Dorsolateral prefrontal cortex (tissue), 120 donors: ENCODE measurements at regions of chr13 and their contacts with region 1.

Region 1: DNA sequence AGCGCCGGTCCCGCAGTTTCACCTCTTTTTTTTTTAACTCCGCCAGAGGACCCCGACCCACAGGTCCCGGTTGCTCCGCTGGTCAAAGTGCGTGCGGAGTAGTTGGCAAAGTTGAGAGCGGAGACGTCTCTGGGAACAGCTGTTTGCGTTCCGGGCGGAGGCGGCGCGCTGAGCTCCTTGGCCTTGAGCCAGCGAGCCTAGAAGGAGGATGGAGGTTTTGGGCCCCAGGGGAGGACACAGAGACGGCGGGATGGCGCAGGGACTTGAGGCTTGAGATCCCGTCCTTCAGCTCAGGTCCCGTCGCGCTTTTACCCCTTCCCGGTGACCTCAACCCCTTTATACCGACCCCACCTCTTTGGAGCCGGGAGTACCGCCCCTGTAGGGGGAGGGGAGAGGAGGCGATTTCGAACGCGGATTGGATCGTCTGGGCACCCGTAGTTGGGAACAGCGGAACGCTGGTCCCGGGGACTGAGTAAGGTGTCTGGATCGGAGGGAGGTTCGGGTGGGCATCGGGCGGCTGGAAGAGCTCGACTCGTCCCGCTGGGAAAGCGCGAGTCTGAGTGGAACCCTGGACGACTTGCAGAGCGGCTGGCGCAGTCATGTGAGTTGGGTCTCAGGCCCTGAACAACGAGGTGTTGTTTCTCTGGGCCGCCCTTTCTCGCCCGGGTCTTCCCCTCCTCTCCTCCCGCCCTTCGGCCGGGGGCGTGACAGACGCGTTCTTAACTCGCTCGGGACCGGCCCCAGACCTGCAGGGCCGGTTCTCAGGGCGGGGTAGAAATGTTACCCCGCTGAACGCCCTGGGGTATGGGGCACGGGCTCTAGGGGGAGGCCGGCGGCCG is at the start of gene WBP4:
- DNase-seq: peak; percentile 86 to 94 (median 88)
- H3K4me3 ChIP-seq: peak within 1 kb of the TSS; percentile 70 to 98 (median 90)
- H3K27ac ChIP-seq: peak within 1 kb of the TSS; percentile 96 to 100 (median 99)
- H3K27me3 ChIP-seq: no peaks in the 10 kb centered on the region
- CTCF ChIP-seq: peak in 25 of 56 donors; percentile 3 to 44 (median 16)
- total RNA-seq, gene WBP4: 10.6 to 23.8 (median 17.6) TPM

Region 2: DNA sequence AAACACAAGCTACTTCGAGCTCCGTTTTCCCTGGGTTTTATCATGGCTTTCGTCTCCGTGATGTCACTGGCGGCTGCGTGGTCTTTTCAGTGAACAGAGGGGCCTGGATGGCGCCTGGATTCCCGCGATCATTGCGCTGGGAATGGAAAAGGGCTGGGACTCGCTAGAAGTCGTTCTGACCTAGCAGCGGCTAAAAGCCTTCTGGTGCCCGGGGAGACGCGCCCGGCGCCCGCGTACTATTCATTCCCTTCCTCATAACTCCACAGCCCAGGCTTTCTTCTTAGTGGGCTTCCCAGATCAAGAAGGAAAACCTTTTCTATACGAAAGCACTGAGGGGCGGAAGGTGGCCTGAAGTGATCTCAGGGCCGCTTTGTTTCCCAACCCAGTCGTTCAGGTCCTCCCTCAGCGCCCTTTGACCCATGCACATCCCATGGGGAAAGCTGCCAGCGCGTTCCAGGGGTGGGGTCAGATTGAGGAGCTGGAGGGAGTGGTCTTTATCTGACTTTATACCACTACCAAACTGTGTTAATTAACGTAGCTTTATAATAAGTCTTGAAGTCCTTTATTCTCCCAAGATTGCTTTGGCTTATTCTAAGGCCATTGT is 138.8 kb before region 1 on chr13:
- intact Hi-C with region 1: loop called (anchors 2 kb)
- DNase-seq: no peak
- H3K4me3 ChIP-seq: peak overlapping the region in 2 of 59 donors; percentile 74 to 85
- H3K27ac ChIP-seq: no peak overlapping the region
- H3K27me3 ChIP-seq: no peaks in the 10 kb centered on the region
- CTCF ChIP-seq: no peak

Region 3: DNA sequence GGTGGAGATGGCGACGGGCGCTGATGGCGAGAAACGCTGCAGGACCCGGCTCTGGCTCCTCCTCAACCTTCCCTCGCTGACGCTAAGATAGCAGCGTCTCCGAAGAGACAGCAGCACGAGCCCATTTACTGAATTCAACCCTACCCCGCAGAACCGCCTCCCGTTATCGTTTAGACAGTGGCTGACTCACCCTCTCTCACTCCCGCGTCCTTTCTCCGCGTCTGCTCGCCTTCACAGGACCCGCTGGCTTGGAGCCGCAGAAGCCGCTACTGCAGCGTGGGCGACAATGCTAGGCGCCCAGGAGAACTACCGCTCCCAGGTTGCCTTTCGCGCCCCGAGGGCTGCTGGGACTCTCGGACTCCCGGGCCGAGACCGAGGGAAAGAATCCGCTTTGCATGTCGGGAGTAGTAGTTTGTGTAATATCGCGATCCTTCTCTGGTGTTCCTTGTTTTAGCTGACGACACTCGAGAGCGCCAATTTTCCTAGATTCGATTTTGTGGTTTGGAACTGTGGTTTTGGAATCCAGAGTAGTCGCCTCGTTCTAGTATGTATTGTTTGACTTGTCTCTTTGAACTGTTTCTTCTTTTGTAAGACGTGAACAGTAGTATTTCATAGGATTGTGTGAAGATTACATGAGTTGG is 71.3 kb after region 1 on chr13 and contains the start of gene KBTBD6:
- intact Hi-C with region 1: loop called in 1 of 2 experiments (anchors 1 kb)
- DNase-seq: peak; percentile 95 to 98 (median 97)
- H3K4me3 ChIP-seq: peak within 1 kb of the TSS; percentile 54 to 93 (median 82)
- H3K27ac ChIP-seq: peak within 1 kb of the TSS; percentile 52 to 95 (median 88)
- H3K27me3 ChIP-seq: no peaks in the 10 kb centered on the region
- CTCF ChIP-seq: peak in 38 of 56 donors; percentile 3 to 54 (median 30)
- total RNA-seq, gene KBTBD6: 14.9 to 35.1 (median 24.4) TPM

Region 4: GRCh38 chr13:41162151-41162550 is 100.9 kb after region 1 on chr13:
- intact Hi-C with region 1: no loop called
- DNase-seq: no peak
- H3K4me3 ChIP-seq: no peak overlapping the region
- H3K27ac ChIP-seq: no peak overlapping the region
- H3K27me3 ChIP-seq: no peaks in the 10 kb centered on the region
- CTCF ChIP-seq: no peak

Region 5: GRCh38 chr13:41263261-41264027 is 202.2 kb after region 1 on chr13 and contains the start of gene MTRF1:
- intact Hi-C with region 1: loop called in 1 of 2 experiments (anchors 5 kb)
- DNase-seq: peak; percentile 72 to 91 (median 86)
- H3K4me3 ChIP-seq: peak within 1 kb of the TSS; percentile 49 to 98 (median 78)
- H3K27ac ChIP-seq: peak within 1 kb of the TSS in 58 of 59 donors; percentile 58 to 97 (median 91)
- H3K27me3 ChIP-seq: no peaks in the 10 kb centered on the region
- CTCF ChIP-seq: peak in 15 of 56 donors; percentile 5 to 48 (median 15)
- total RNA-seq, gene MTRF1: 7.2 to 34.6 (median 15.6) TPM